ENCODE measurements at regions of chr19 and their contacts with region 1.

Region 1: GRCh38 chr19:55653758-55654539 is 886 bp upstream of the U2AF2 start:
- DNase-seq: peak; percentile 99
- H3K4me3 Mint-ChIP-seq: peak overlapping the region; percentile 93
- H3K27ac Mint-ChIP-seq: peak overlapping the region; percentile 99
- H3K4me1 Mint-ChIP-seq: peaks cover 43% of the 10 kb centered on the region
- H3K27me3 Mint-ChIP-seq: no peaks in the 10 kb centered on the region

Region 2: DNA sequence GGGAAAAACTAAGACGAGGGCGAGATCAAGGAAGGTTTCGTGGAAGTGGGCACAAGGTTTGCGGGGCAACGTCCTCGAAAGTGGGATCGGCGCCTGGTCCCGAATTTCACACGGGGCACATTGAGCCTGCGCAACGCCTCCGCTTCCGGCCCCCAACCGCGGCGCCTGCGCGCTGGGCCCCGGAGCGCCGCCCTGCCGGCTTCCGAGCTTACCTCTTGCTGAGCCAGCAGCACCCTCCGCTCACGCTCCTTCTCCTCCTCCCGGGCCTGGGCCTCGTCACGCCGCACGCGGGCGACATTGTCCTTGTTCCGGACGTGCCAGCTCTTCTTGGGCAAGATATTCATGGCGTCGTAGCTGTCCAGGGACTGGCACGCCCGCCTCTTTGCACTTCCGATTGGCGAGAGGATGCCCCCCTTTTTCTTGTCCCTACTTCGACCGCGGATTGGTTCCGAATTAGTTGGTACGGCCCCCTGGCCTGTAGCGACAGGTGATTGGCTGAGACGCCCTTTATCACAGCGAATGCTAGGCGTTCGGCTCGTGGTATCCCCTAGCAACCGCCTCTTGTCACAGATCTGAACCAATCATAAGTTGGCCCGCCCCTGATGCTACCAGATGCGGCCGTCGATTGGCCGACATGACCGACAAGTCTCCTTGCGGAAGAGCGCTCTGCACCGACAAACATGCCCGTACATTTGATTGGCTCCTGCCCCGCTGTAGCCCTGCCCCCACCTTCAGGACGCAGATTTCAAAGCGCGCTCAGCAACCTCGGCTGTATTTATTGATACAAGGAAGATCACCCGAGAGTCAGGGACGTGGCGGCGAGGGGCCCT is 1494.4 kb before region 1 on chr19 and contains the start of gene LENG1:
- intact Hi-C with region 1: loop called (anchors 1 kb)
- DNase-seq: peak; percentile 99
- H3K4me3 Mint-ChIP-seq: peak within 1 kb of the TSS; percentile 95
- H3K27ac Mint-ChIP-seq: peak within 1 kb of the TSS; percentile 99
- H3K4me1 Mint-ChIP-seq: peaks cover 56% of the 10 kb centered on the region
- H3K27me3 Mint-ChIP-seq: peaks cover 4% of the 10 kb centered on the region
- total RNA-seq, gene LENG1: 5.8 and 6.6 TPM in 2 replicates

Region 3: GRCh38 chr19:55599468-55600279 is 54.3 kb before region 1 on chr19 and contains the start of gene FIZ1:
- intact Hi-C with region 1: loop called (anchors 1 kb)
- DNase-seq: peak; percentile 95
- H3K4me3 Mint-ChIP-seq: peak within 1 kb of the TSS; percentile 93
- H3K27ac Mint-ChIP-seq: peak within 1 kb of the TSS; percentile 98
- H3K4me1 Mint-ChIP-seq: peaks cover 28% of the 10 kb centered on the region
- H3K27me3 Mint-ChIP-seq: no peaks in the 10 kb centered on the region
- total RNA-seq, gene FIZ1: 24.2 and 24.7 TPM in 2 replicates

Region 4: GRCh38 chr19:55643348-55644176 is 10.4 kb before region 1 on chr19 and contains the start of gene ZNF581:
- intact Hi-C with region 1: loop called (anchors 1 kb)
- DNase-seq: peak; percentile 77
- H3K4me3 Mint-ChIP-seq: peak within 1 kb of the TSS; percentile 100
- H3K27ac Mint-ChIP-seq: peak within 1 kb of the TSS; percentile 99
- H3K4me1 Mint-ChIP-seq: peaks cover 43% of the 10 kb centered on the region
- H3K27me3 Mint-ChIP-seq: no peaks in the 10 kb centered on the region
- total RNA-seq, gene ZNF581: 35.6 and 36.4 TPM in 2 replicates

Region 5: GRCh38 chr19:56090931-56091490 is 437.1 kb after region 1 on chr19:
- intact Hi-C with region 1: no loop called
- DNase-seq: no peak
- H3K4me3 Mint-ChIP-seq: no peak overlapping the region
- H3K27ac Mint-ChIP-seq: peak overlapping the region; percentile 54
- H3K4me1 Mint-ChIP-seq: no peaks in the 10 kb centered on the region
- H3K27me3 Mint-ChIP-seq: no peaks in the 10 kb centered on the region

Region 6: GRCh38 chr19:56140583-56141416 is 486.9 kb after region 1 on chr19 and contains the start of gene ZNF444:
- intact Hi-C with region 1: loop called (anchors 1 kb)
- DNase-seq: peak; percentile 99
- H3K4me3 Mint-ChIP-seq: peak within 1 kb of the TSS; percentile 82
- H3K27ac Mint-ChIP-seq: peak within 1 kb of the TSS; percentile 84
- H3K4me1 Mint-ChIP-seq: peaks cover 37% of the 10 kb centered on the region
- H3K27me3 Mint-ChIP-seq: no peaks in the 10 kb centered on the region
- total RNA-seq, gene ZNF444: 33.8 and 36.5 TPM in 2 replicates

Measured in activated T-helper 1 cell treated with anti-CD3 and anti-CD28 coated beads, Interleukin-12 subunit alpha, Interleukin-12 subunit beta, Interleukin-2, Interleukin-4 antibody, amounts not matched to agents 30 ng/mL and 10 ng/mL and 1 ng/mL, durations not matched to agents 14 hours and 24 hours and 36 hours (primary cell).